ENCODE measurements at regions of chr20 and their contacts with region 1.

Region 1: DNA sequence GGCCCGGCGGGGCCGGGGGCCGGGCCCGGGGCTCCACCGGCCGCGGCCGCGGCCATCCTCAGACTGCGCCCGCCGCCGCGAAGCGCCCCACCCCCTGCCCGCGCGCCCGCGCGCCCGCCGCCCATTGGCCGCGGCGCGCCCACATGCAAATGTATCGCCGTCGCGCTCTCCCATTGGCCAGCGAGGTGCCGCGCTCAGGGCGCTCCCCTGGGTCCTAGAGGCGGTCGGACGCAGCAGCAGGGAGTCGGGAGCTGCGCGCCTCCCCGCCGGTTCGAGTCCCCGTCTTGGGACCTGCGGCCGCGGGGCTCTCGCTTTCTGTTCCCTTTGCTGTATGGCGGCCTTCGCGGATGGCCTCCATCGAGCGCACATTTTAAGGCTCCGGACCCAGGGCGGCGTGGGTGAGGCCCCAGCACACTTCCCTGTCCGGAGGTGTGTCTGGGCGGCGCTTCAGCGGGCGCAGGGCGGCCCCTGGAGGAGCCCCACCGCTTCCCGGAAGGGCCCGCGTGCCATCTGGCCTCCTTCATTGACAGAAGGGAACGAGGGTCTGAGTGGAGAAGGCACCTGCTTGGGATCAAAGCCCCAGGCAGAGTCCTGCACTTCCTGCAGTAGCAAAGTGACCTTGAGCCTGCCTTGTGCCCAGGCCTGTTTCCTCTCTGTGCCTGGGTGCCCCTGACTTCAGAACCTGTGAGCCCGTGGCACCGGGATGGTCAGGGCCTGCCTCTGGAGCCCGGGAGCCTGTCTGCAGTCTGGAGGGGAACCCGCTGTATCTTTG is at the start of gene CABLES2:
- DNase-seq: peak; percentile 88 to 94 (median 92)
- H3K4me3 ChIP-seq: peak within 1 kb of the TSS; percentile 72
- H3K27ac ChIP-seq: peak within 1 kb of the TSS; percentile 13 to 50
- H3K4me1 ChIP-seq: peaks cover 14% of the 10 kb centered on the region
- H3K27me3 ChIP-seq: no peaks in the 10 kb centered on the region
- CTCF ChIP-seq: peak in 2 of 3 donors; percentile 63
- EP300 ChIP-seq: no peak
- POLR2A ChIP-seq: no peak
- total RNA-seq, gene CABLES2: 3.6 to 7.0 (median 4.9) TPM

Region 2: GRCh38 chr20:62010551-62011402 is 396.6 kb before region 1 on chr20:
- intact Hi-C with region 1: loop called in 1 of 4 experiments (anchors 10 kb)
- DNase-seq: peak; percentile 54 to 72 (median 70)
- H3K4me3 ChIP-seq: no peak overlapping the region
- H3K27ac ChIP-seq: no peak overlapping the region
- H3K4me1 ChIP-seq: peaks cover 2% of the 10 kb centered on the region
- H3K27me3 ChIP-seq: no peaks in the 10 kb centered on the region
- CTCF ChIP-seq: peak; percentile 32 to 68 (median 60)
- EP300 ChIP-seq: no peak
- POLR2A ChIP-seq: no peak

Region 3: GRCh38 chr20:62476056-62476838 is 68.8 kb after region 1 on chr20:
- intact Hi-C with region 1: no loop called
- DNase-seq: no peak
- H3K4me3 ChIP-seq: peak overlapping the region; percentile 35
- H3K27ac ChIP-seq: no peak overlapping the region
- H3K4me1 ChIP-seq: peaks cover 1% of the 10 kb centered on the region
- H3K27me3 ChIP-seq: peaks cover 16% of the 10 kb centered on the region
- CTCF ChIP-seq: no peak
- EP300 ChIP-seq: no peak
- POLR2A ChIP-seq: no peak

Region 4: DNA sequence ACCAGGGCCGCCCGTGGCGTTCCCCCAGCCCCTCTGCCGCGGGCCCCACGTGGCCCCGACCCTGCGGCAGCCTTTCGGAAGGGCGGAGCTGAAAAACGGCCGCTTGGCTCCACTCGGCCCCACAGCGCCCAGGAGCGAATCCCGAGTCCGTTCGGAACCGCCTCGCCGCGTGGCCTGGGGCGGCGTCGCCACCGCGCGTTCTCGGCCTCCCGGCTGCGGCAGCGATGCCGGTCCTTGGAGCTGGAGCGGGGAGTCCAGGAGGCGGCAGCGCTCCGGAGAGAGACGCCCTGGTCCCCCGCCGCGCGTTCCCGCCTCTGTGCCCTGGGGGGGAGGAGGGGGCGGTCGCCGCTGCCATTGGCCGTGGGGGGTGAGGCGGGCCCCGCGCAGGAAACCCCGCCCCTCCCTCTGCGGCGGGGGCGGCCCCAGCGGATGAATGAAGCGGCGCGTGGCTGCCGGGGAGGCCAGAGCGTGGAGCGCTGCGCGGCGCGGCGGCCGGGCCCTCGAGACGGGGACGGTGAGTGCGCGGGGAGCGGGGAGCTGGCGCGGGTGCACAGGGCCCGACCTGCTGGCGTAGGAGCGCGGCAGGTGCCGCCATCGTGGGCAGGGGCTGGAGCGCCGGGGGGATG is 234.7 kb after region 1 on chr20 and contains the start of gene SLCO4A1:
- intact Hi-C with region 1: loop called in 1 of 4 experiments (anchors 10 kb)
- DNase-seq: peak in 4 of 5 donors; percentile 60 to 78 (median 76)
- H3K4me3 ChIP-seq: peak within 1 kb of the TSS; percentile 53
- H3K27ac ChIP-seq: no peak within 1 kb of the TSS
- H3K4me1 ChIP-seq: peaks cover 12% of the 10 kb centered on the region
- H3K27me3 ChIP-seq: no peaks in the 10 kb centered on the region
- CTCF ChIP-seq: no peak
- EP300 ChIP-seq: no peak
- POLR2A ChIP-seq: peak; percentile 47
- total RNA-seq, gene SLCO4A1: 3.3 to 10.9 (median 4.4) TPM

Region 5: DNA sequence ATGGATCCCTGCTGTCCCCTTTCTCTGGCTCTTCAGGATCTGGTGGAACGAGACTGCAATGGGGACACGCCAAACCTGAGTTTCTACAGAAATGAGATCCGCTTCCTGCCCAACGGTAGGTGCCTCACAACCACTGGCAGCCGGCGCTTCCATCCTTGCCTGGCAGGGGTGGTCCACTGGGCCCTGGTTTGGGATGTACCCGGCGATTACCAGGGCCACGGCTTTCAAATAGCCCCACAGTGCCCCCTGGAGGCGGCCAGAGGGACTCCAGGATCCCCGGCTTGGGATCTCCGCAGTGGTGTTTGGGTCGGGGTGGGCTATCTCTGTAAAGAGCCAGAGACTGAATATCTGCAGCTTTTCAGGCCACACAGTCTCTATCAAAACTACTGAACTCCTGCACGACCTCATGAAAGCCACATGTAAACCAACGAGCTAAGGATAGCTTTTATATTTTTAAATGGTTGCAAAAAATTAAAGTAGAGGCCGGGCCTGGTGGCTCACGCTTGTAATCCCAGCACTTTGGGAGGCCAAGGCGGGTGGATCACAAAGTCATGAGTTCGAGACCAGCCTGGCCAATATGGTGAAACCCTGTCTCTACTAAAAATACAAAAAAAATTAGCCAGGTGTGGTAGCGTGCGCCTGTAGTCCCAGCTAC is 400.9 kb after region 1 on chr20:
- intact Hi-C with region 1: loop called in 1 of 4 experiments (anchors 5 kb)
- DNase-seq: peak; percentile 63 to 83 (median 77)
- H3K4me3 ChIP-seq: no peak overlapping the region
- H3K27ac ChIP-seq: no peak overlapping the region
- H3K4me1 ChIP-seq: peaks cover 10% of the 10 kb centered on the region
- H3K27me3 ChIP-seq: no peaks in the 10 kb centered on the region
- CTCF ChIP-seq: peak; percentile 75 to 80 (median 78)
- EP300 ChIP-seq: no peak
- POLR2A ChIP-seq: no peak

Region 6: DNA sequence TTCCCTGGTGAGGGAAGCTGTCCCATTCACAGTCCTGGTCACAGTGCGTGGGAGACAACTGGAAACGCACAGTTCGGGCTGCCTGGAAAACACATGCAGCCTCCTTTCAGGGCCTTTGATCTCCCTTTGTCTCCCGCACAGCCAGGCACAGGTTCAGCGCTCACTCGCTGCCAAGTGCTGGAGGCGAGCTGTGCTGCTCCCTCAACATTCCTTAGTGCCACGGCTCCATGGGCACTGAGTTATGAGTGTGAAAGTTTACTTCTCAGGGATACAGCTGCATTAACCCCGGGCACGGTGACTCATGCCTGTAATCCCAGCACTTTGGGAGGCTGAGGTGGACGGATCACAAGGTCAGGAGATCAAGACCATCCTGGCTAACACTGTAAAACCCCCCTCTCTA is 799.5 kb after region 1 on chr20:
- intact Hi-C with region 1: loop called in 1 of 4 experiments (anchors 10 kb)
- DNase-seq: peak in 1 of 5 donors; percentile 24
- H3K4me3 ChIP-seq: no peak overlapping the region
- H3K27ac ChIP-seq: no peak overlapping the region
- H3K4me1 ChIP-seq: no peaks in the 10 kb centered on the region
- H3K27me3 ChIP-seq: no peaks in the 10 kb centered on the region
- CTCF ChIP-seq: no peak
- EP300 ChIP-seq: no peak
- POLR2A ChIP-seq: no peak